HEK293 (cell line): ENCODE measurements at regions of chr15 and their contacts with region 1.

Region 1: GRCh38 chr15:74768771-74769342 is 13.0 kb upstream of the CSK start:
- H3K4me3 ChIP-seq: no peak overlapping the region
- H3K27ac ChIP-seq: no peak overlapping the region
- H3K4me1 ChIP-seq: no peaks in the 10 kb centered on the region
- CTCF ChIP-seq: peak; percentile 89

Region 2: DNA sequence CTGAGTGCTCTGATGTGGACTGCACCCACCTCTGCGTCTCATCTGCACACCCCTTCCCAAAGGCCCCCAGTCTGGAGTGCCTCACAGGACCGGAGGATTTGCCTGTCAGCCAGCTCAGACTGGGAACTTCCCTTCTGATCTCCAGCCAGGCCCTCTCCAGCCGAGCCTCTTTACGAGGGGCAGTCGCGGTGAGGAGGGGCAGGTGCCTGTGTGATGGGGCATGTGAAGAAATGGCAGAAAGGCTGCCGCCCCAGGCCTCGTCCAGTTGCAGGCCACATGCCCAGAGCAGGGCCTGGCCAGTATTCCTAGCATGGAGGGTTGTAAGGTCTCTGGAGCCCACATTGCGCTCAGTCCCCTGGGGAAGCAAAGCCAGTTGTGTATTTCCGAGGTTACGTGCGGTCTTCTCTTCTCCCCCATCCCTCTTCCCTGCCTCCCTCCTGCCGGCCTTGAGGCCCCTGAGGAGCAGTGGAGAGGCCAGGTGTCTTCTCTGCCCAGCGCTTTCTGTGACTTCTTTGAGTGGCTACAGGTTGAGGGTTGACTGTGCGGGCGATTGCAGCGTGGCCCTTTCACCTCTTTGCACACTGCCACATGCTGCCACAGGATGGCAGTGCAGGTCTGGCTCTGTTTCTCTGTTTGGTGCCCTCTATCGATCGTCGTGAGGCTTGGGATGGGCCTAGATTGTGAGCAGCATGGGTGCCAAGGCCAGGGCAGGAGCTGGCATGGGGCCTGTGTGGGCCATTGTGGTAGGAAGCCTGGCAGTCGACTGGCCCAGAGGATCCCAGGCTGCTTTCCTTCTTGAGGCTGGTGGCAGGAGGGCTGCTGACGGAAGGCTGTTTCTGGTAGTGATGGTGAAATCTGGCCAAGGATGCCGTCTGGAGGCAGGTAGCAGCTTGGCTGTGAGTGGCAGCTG is 148.0 kb before region 1 on chr15:
- CTCF ChIA-PET with region 1: interaction called, 120 read pairs
- POLR2A ChIA-PET with region 1: interaction called, 6 read pairs
- H3K4me3 ChIP-seq: no peak overlapping the region
- H3K27ac ChIP-seq: no peak overlapping the region
- H3K4me1 ChIP-seq: peaks cover 9% of the 10 kb centered on the region
- CTCF ChIP-seq: peak; percentile 100

Region 3: DNA sequence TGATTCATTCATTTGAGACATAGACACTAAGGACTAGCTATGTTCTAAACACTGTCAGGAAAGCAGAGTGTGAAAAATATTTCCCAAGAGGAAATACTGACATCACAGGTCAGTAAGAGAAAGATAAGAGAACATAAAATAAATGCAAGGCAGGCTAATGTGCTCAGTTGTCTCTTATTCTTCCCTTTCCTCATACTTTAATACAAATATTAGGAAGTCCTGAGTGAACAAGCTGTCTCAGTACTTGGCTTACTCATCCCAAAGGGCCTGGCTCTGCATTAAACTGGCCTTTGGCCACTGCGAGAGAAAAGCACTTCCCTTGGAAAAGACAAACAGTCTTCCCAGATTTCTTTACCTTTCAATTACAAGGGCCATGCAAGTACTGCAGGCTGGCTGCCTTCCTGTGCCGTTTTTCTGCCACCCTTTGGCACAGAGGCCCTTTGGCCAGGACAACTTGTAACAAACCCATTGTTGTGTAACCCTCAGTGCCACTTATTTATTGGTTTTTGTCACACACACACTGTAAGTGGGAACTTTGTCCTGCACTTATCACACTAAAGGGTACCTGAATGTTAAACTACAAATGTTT is 104.7 kb before region 1 on chr15:
- CTCF ChIA-PET with region 1: interaction called, 24 read pairs
- POLR2A ChIA-PET with region 1: no interaction called
- H3K4me3 ChIP-seq: no peak overlapping the region
- H3K27ac ChIP-seq: peak overlapping the region; percentile 48
- H3K4me1 ChIP-seq: peaks cover 26% of the 10 kb centered on the region
- CTCF ChIP-seq: no peak

Region 4: DNA sequence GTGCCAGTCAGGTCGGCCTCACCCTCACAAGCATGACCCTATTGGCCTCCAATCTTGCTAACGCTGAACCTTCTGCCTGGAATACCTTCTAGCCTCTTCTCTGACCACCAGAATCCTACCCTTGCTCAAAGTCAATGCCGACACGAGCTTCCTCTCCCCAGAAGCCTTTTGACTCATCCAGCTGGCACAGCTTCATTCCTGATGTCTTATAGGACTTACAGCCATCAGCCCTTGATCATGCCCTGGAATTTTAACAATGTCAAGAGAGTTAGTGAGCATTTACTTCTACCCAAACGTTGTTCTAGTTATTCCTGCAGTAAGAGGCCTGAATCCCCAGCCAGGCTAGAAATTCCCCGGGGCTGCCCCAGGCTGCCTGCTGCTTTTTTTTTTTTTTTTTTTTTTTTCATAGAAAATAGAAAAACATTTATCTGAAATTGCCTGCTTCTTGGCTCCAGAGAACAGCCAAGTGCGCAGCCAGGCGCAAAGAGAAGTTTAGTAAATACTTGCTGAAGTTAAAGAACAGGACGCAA is 16.3 kb before region 1 on chr15:
- CTCF ChIA-PET with region 1: interaction called, 71 read pairs
- POLR2A ChIA-PET with region 1: no interaction called
- H3K4me3 ChIP-seq: no peak overlapping the region
- H3K27ac ChIP-seq: no peak overlapping the region
- H3K4me1 ChIP-seq: no peaks in the 10 kb centered on the region
- CTCF ChIP-seq: no peak

Region 5: GRCh38 chr15:74816808-74817674 is 48.2 kb after region 1 on chr15:
- CTCF ChIA-PET with region 1: interaction called, 65 read pairs
- POLR2A ChIA-PET with region 1: no interaction called
- H3K4me3 ChIP-seq: no peak overlapping the region
- H3K27ac ChIP-seq: no peak overlapping the region
- H3K4me1 ChIP-seq: no peaks in the 10 kb centered on the region
- CTCF ChIP-seq: peak; percentile 21; the same call in 1 of the 2 replicates

Region 6: DNA sequence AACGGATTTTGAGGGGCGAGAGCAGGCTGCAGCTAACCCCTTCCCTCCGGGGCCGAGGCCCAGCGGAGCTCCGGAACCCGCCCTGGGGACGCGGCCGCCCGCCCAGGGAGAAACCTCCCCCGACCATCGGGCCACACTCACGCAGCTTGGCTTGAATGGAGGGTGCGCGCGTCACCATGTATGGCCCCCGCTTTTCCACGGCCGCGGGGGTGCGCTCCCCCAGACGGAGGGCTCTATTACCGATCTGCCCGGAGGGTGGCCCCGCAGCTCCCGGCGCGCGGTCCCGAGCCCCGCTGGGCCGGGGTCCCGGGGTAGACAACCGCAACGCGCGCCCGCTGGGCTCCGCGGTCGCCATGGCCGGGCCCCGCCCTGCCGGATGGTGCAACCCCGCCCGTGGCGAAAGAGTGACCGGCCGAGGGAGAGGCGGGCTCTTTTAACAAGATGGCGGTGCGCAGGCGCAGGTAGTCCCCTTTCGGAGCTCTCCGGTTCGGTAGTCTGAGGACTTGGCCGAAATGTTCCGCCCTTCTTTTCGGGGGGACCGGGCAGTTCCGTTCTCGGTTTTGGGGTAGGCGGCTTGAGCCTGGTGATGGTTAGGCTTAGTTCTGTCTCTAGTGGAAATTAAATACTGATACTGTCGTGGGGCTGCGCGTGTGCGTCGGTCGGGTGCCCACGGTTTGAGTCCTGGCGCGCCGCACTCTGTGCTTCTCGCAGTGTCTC is 137.7 kb after region 1 on chr15 and contains the start of gene FAM219B:
- CTCF ChIA-PET with region 1: interaction called, 84 read pairs
- POLR2A ChIA-PET with region 1: interaction called, 11 read pairs
- H3K4me3 ChIP-seq: peak within 1 kb of the TSS; percentile 82
- H3K27ac ChIP-seq: peak within 1 kb of the TSS; percentile 89
- H3K4me1 ChIP-seq: peaks cover 3% of the 10 kb centered on the region; the same call in 1 of the 2 replicates
- CTCF ChIP-seq: peak; percentile 60

Region 7: GRCh38 chr15:74988007-74988800 is 219.3 kb after region 1 on chr15:
- CTCF ChIA-PET with region 1: interaction called, 17 read pairs
- POLR2A ChIA-PET with region 1: no interaction called
- H3K4me3 ChIP-seq: no peak overlapping the region
- H3K27ac ChIP-seq: no peak overlapping the region
- H3K4me1 ChIP-seq: no peaks in the 10 kb centered on the region
- CTCF ChIP-seq: peak; percentile 82